Activated CD4-positive, alpha-beta T cell treated with anti-CD3 and anti-CD28 coated beads, Interleukin-2, amount 10 ng/mL, durations not matched to agents 24 days and 14 days (primary cell): ENCODE measurements at regions of chr1 and their contacts with region 1.

Region 1: DNA sequence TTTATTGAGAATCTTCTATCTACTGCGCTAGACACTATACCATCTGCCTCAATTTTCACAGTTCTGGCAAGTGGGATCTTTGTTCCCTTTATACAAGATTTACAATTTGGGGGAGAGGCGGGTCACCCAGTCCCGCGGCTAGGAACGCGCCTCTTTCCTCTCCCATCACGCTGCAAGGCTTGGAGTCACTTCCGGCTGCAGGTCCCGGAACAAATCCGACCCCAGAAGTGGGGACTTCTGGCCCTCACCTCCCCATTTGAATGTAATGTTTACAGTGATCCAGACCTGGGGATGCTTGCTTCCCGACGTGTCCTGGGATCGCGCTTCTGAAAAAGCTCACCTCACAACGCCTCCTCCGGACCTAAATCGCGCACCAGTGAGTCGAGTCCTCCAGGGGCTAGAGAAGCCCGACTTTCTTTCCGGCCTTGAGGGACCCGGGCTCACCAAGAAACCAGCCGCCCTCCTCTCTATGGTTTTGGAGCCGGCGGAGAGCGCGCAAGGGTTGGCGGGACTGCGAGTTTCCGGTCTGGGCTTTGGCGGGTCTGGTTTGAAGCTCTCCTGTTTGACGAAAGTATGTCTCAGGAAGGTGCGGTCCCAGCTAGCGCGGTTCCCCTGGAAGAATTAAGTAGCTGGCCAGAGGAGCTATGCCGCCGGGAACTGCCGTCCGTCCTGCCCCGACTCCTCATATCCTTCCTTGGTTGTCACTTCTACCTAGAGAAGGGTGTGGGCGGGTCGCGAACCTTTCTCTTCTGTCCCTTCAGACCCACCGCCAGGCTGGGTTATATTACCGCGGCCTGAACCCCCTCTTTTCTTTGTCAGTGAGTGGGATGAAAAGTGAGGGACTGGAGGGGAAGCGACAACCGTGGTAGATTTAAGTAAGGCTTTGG is at the start of gene METTL18:
- DNase-seq: peak; percentile 98
- H3K4me3 Mint-ChIP-seq: peak within 1 kb of the TSS; percentile 99
- H3K27ac Mint-ChIP-seq: peak within 1 kb of the TSS; percentile 97
- H3K4me1 Mint-ChIP-seq: peaks cover 45% of the 10 kb centered on the region
- H3K27me3 Mint-ChIP-seq: no peaks in the 10 kb centered on the region
- total RNA-seq, gene METTL18: 9.3 and 10.3 TPM in 2 replicates

Region 2: DNA sequence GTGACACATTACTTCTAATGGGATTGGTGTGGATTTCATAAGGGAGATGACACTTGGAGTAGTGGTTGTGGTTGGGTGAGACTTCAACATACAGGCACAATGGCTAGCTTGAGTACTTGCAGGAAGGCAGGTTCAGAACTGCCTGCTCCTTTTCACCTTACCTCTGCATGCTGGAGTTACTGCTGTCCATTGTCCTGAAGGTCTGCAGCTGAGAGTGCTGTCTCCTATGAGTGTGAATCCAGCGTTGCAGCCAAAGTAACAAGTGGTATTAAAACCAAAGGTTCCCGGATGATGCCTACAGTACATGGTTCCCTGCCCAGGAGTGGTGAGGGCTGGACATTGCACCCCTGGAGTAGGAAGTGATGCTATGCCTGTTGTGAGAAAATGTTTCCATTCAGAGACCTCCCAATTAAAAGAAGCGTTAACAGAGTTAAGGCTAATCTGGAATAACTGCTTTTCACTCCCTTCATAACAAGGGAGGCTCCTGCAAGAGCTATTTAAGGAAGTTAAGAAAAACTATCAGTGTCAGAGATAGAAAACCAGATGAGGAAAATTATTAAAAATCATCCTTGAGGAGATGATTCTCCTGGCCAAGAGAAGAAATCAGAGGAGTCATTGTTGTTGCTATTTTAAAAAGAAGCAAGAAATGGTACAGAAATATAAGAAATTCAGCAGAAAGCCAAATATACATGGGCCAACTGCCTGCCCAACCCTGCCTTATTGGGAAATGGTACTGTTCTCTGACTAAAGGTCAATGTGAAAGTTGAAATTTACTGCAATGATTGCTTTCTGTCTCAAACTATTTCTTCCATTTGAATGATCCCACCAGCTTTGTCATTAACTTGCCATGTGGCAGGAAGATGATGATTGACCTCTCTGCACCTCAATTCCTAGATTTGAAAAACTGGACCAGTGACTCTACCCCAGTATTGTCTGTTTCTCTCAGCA is 198.7 kb before region 1 on chr1:
- intact Hi-C with region 1: loop called (anchors 2 kb)
- DNase-seq: peak; percentile 78
- H3K4me3 Mint-ChIP-seq: no peak overlapping the region
- H3K27ac Mint-ChIP-seq: no peak overlapping the region
- H3K4me1 Mint-ChIP-seq: peaks cover 48% of the 10 kb centered on the region
- H3K27me3 Mint-ChIP-seq: peaks cover 5% of the 10 kb centered on the region

Region 3: DNA sequence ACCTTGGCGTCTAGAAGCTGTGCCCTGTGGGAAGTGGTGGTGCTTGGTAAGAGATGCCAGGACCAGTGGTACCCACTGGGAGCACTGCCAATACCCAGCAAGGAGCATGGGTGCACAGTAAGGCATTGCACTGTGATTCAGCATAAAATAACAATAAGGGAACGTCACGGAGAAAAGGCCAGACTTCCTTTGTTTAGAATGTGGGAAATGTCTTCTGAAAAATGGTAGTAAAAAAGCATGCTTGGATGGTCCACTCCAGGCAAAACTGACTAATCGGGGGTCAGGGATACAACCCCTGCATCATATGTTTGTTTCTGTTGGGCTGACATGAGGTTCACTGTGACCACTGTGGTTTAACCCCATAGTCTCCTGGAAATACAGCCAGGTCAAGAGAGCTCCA is 14.8 kb before region 1 on chr1:
- intact Hi-C with region 1: no loop called
- DNase-seq: no peak
- H3K4me3 Mint-ChIP-seq: no peak overlapping the region
- H3K27ac Mint-ChIP-seq: no peak overlapping the region
- H3K4me1 Mint-ChIP-seq: no peaks in the 10 kb centered on the region
- H3K27me3 Mint-ChIP-seq: peaks cover 21% of the 10 kb centered on the region

Region 4: DNA sequence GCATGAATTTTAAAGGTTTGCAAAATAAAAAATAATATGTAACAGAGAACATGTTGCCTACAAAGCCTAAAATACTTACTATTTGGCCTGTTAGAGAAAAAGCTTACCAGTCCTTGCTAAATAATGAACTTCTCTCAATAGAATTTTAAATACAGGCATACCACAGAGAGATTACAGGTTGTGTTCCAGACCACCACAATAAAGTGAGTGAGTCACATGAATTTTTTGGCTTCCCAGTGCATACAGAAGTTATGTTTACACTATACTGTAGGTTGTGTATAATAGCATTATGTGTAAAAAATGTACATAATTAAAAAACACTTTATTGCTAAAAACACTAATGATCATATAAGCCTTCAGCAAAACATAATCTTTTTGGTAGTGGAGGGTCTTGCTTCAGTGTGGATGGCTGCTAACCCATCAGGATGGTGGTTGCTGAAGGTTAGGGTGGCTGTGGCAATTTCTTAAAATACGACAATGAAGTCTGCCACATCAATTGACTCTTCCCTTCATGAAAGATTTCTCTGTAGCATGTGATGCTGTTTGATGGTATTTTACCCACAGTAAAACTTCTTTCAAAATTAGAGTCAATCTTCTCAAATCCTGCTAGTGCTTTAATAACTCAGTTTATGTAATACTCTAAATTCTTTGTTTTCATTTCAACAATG is 50.3 kb after region 1 on chr1:
- intact Hi-C with region 1: no loop called
- DNase-seq: no peak
- H3K4me3 Mint-ChIP-seq: no peak overlapping the region
- H3K27ac Mint-ChIP-seq: no peak overlapping the region
- H3K4me1 Mint-ChIP-seq: peaks cover 9% of the 10 kb centered on the region
- H3K27me3 Mint-ChIP-seq: no peaks in the 10 kb centered on the region